Ascending aorta (tissue), 2 donors: ENCODE measurements at regions of chr7 and their contacts with region 1.

Region 1: DNA sequence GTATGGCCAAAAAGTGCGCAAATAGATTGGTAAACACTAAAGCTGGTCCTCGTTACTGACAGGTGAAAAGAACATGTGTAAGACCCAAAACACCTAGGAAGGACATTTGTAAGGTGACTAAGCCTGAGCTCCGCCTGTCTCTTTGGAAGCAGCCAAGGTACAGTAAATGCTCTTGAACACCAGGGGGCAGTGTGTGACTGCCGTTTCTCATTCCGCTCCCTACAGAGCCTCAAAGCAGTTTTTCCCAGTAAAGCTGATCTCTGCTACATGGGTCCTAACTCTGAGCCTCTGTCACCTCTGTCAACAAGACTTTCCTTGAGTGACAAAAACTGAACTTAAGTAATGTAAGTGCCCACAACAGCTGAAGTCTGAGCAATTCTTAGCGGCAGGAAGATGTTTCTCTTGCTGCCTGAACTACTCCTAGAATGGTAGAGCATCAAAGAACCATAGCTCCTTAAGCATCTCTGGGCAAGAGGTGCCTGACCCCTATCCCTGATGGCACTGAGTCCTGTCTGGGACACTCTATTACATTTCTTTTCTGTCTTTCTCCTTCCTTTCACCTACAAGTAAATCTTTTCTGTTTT is 238.0 kb upstream of the INHBA start:
- DNase-seq: peak in 1 of 2 donors; percentile 81
- H3K4me3 ChIP-seq: no peak overlapping the region
- H3K27ac ChIP-seq: no peak overlapping the region
- H3K4me1 ChIP-seq: no peaks in the 10 kb centered on the region
- H3K27me3 ChIP-seq: no peaks in the 10 kb centered on the region
- CTCF ChIP-seq: peak; percentile 74 to 89 (median 86)

Region 2: DNA sequence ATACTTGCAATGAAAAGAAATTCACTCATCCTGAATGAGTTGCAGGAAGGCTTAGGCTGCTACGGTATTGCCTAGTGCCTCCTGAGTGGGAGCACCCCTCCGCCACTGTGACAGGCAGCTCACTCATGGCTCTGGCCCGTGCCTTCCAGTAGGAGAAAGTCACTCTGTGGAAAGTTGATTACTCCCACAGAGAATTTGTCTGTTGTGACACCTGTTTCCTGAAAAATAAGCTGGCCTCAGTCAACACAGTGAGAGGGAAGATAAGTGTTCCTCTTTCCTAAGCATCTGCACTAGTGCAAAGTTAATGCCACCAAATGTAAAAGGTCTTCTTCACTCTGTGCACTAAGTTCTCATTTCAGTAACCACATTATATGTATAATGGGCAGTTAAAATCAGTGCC is 79.2 kb before region 1 on chr7:
- intact Hi-C with region 1: no loop called
- DNase-seq: no peak
- H3K4me3 ChIP-seq: no peak overlapping the region
- H3K27ac ChIP-seq: no peak overlapping the region
- H3K4me1 ChIP-seq: no peaks in the 10 kb centered on the region
- H3K27me3 ChIP-seq: no peaks in the 10 kb centered on the region
- CTCF ChIP-seq: no peak

Region 3: GRCh38 chr7:41955893-41956675 is 15.2 kb after region 1 on chr7:
- intact Hi-C with region 1: loop called (anchors 1 kb)
- DNase-seq: peak; percentile 54 to 97
- H3K4me3 ChIP-seq: peak overlapping the region; percentile 22 to 37
- H3K27ac ChIP-seq: peak overlapping the region in 1 of 2 donors; percentile 2
- H3K4me1 ChIP-seq: peaks cover 0 to 20% of the 10 kb centered on the region in 2 donors
- H3K27me3 ChIP-seq: no peaks in the 10 kb centered on the region
- CTCF ChIP-seq: no peak

Region 4: GRCh38 chr7:41977151-41977651 is 36.3 kb after region 1 on chr7:
- intact Hi-C with region 1: loop called (anchors 2 kb)
- DNase-seq: no peak
- H3K4me3 ChIP-seq: no peak overlapping the region
- H3K27ac ChIP-seq: no peak overlapping the region
- H3K4me1 ChIP-seq: peaks cover 0 to 9% of the 10 kb centered on the region in 2 donors
- H3K27me3 ChIP-seq: no peaks in the 10 kb centered on the region
- CTCF ChIP-seq: peak; percentile 35 to 76 (median 62)

Region 5: GRCh38 chr7:42690794-42691639 is 750.2 kb after region 1 on chr7:
- intact Hi-C with region 1: loop called (anchors 2 kb)
- DNase-seq: no peak
- H3K4me3 ChIP-seq: no peak overlapping the region
- H3K27ac ChIP-seq: no peak overlapping the region
- H3K4me1 ChIP-seq: peaks cover 0 to 4% of the 10 kb centered on the region in 2 donors
- H3K27me3 ChIP-seq: no peaks in the 10 kb centered on the region
- CTCF ChIP-seq: peak in 2 of 3 experiments; percentile 31 to 51

Region 6: GRCh38 chr7:42831718-42832431 is 891.0 kb after region 1 on chr7:
- intact Hi-C with region 1: loop called (anchors 2 kb)
- DNase-seq: no peak
- H3K4me3 ChIP-seq: no peak overlapping the region
- H3K27ac ChIP-seq: no peak overlapping the region
- H3K4me1 ChIP-seq: peaks cover 0 to 3% of the 10 kb centered on the region in 2 donors
- H3K27me3 ChIP-seq: no peaks in the 10 kb centered on the region
- CTCF ChIP-seq: peak; percentile 42 to 69 (median 43)